ENCODE measurements at regions of chr12 and their contacts with region 1.

Region 1: DNA sequence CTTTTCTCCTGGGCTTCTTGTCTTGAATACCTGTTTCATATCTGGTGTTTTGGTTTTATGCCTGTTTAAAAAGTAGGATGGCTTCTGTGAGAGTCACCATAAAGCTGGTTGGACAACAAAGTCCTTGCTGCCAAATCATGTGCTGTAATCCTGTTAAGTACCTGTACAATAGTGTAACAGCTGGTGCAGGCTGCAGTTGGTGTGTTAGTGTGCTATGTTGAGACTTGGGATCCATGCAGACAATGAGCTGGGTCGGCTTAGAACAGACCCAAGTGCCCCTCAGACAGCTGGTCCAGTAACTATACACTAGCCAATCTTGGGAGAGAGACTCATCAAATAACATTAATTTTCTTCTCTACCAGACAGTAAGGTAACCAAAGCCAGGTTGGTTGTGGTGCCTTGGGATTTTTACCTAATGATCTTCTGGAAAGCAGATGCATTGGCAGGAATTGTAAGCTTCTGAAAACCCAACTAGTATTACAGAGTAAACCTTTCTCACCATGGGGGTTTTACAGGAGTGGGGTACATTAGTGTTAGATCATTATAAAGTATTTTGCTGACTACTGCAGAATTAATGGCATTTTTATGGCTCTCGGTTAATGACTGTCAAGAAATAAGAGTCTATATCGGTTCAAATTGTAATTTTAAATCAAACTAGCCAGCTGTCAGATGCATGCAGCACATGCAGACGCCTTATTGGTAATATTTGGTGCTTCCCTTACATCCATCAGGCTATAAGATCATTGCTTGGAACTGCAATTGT is 231.2 kb downstream of the PDZRN4 start:
- DNase-seq: no peak
- H3K4me3 ChIP-seq: no peak overlapping the region
- H3K27ac ChIP-seq: no peak overlapping the region
- H3K4me1 ChIP-seq: no peaks in the 10 kb centered on the region
- H3K27me3 ChIP-seq: no peaks in the 10 kb centered on the region
- CTCF ChIP-seq: no peak
- POLR2A ChIP-seq: no peak

Region 2: DNA sequence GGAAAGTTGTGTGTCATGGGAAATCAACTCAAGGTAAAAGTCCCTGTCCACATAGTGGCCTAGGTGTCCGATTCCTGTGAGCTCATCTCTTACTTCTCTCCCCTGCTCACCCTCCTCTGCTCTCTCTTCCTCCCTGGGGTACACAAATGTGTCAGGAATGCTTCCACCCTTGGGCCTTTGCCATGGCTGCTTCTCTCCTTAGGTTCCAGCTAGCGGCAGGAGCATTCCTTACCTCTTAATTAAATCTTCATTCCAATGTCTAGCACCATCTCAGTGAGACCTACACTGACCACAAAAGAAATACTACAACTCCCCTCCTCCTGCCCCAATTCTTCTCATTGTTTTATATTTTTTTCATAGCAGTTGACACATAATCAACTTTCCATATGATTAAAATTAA is 67.4 kb after region 1 on chr12:
- CTCF ChIA-PET with region 1: no interaction called
- POLR2A ChIA-PET with region 1: no interaction called
- dilution Hi-C with region 1: no loop called
- intact Hi-C with region 1: loop called (anchors 5 kb)
- DNase-seq: no peak
- H3K4me3 ChIP-seq: no peak overlapping the region
- H3K27ac ChIP-seq: peak overlapping the region; percentile 71
- H3K4me1 ChIP-seq: peaks cover 24% of the 10 kb centered on the region
- H3K27me3 ChIP-seq: no peaks in the 10 kb centered on the region
- CTCF ChIP-seq: no peak
- POLR2A ChIP-seq: no peak